ENCODE measurements at regions of chr5 and their contacts with region 1.

Region 1: GRCh38 chr5:65961633-65962032 is 35.3 kb downstream of the ERBIN start:
- DNase-seq: no peak
- ATAC-seq: peak; percentile 95
- H3K4me3 Mint-ChIP-seq: peak overlapping the region; percentile 2
- H3K27ac Mint-ChIP-seq: peak overlapping the region; percentile 60
- H3K4me1 Mint-ChIP-seq: peaks cover 52% of the 10 kb centered on the region
- H3K27me3 Mint-ChIP-seq: no peaks in the 10 kb centered on the region
- CTCF ChIP-seq: no peak

Region 2: DNA sequence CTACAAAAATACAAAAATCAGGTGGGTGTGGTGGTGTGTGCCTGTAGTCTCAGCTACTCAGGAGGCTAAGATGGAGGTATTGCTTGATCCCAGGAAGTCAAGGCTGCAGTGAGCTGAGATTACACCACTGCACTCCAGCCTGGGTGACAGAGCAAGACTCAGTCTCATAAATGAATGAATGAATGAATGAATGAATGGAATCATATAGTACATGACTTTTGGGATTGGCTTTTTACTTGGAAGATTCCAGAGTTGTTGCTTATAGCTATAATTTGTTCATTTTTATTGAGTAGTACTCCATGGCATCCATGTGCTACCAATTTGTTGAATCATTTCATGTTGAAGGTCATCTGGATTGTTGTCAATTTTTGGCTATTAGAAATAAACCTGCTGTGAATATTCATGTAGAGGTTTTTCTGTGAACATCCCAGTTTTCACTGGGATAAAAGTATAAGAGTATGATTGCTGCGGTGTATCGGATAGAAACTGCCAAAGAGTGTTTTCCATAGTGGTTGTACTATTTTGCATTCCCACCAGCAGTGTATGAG is 15.4 kb before region 1 on chr5:
- CTCF ChIA-PET with region 1: interaction called, 5 read pairs
- POLR2A ChIA-PET with region 1: interaction called, 4 read pairs
- intact Hi-C with region 1: loop called (anchors 2 kb)
- DNase-seq: no peak
- ATAC-seq: no peak
- H3K4me3 Mint-ChIP-seq: no peak overlapping the region
- H3K27ac Mint-ChIP-seq: no peak overlapping the region
- H3K4me1 Mint-ChIP-seq: peaks cover 50% of the 10 kb centered on the region
- H3K27me3 Mint-ChIP-seq: no peaks in the 10 kb centered on the region
- CTCF ChIP-seq: no peak

Region 3: GRCh38 chr5:66002415-66002814 is 40.8 kb after region 1 on chr5:
- CTCF ChIA-PET with region 1: no interaction called
- POLR2A ChIA-PET with region 1: no interaction called
- intact Hi-C with region 1: no loop called
- DNase-seq: no peak
- ATAC-seq: no peak
- H3K4me3 Mint-ChIP-seq: no peak overlapping the region
- H3K27ac Mint-ChIP-seq: peak overlapping the region; percentile 13
- H3K4me1 Mint-ChIP-seq: peaks cover 19% of the 10 kb centered on the region
- H3K27me3 Mint-ChIP-seq: no peaks in the 10 kb centered on the region
- CTCF ChIP-seq: no peak